HAP-1 (cell line): ENCODE measurements at regions of chr2 and their contacts with region 1.

Region 1: DNA sequence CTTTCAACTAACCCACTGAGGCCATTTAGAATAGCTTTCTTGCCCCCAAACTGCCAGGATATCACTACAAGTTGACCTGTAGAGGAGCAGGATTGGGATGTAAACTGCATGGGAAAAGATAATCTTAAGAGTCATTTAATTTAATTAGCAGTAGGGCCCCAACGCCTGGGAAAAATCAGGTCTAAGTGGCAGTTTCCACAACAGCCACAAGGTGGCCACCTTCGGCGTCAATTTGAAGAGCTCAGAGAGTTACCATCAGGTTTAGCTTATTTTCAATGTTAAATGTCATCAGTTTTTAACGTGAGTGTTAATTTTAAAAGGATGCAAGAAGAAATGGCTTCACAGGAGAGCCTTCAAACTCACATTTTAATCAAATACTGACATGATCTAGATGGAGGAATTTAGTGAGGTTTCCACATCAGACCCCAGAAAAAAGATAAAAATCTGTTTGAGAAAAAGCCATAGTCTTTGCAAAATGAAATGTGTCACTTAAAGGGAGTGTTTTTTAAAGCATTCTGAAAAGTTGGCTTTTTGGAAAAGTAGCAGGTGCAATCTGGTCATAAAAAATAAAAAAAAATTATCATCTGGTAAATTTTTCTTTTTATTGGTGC is 77.3 kb upstream of the UPP2 start:
- DNase-seq: peak; percentile 25 to 67
- H3K4me3 ChIP-seq: no peak overlapping the region
- H3K4me1 ChIP-seq: no peaks in the 10 kb centered on the region
- H3K27me3 ChIP-seq: no peaks in the 10 kb centered on the region

Region 2: DNA sequence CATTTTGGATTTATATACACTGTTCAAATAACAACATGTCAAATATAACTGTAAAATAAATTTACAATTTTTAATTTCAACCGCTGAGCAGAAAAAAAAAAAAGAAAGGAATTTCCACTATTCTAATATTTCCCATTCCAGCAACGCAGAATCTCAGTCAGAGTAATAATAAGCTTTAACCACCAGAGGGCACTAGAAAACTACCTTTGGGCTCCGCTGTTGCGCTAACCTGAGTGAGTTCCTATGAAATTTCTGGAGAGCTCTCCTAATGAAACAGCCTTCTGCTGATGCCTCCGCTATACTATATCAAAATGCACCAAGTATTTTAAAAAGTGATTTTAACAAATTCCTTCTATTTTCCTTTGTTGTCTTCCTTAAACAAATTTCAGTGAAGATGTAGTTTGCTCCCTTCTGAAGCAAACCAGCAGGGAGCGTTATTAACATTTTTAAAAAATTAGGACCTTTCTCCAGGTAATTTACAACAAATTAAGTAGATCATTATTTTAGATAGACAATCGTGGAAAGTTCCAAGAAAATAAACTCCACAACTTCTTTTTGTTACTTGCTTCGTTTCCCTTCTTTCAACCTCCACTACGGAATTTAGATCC is 721.8 kb before region 1 on chr2:
- in situ Hi-C with region 1: loop called (anchors 25 kb)
- DNase-seq: peak; percentile 47 to 67
- H3K4me3 ChIP-seq: no peak overlapping the region
- H3K4me1 ChIP-seq: no peaks in the 10 kb centered on the region
- H3K27me3 ChIP-seq: no peaks in the 10 kb centered on the region

Region 3: DNA sequence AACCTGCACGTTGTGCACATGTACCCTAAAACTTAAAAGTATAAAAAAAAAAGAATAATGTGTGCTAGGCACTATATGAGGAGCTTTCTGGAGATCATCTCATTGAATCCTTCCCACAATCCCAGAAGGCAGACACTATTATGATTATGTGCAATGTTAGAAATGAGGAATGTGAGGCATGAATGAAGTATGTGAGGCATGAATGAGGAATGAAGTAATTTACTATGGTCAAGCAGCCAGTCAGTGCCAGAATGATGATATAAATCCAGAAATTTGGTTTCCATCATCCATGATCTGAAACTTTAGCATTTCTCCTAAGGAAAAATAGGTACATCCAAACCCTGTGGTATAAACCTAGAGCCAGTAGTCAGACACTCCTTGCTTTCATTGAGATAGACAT is 390.1 kb after region 1 on chr2:
- in situ Hi-C with region 1: no loop called
- DNase-seq: no peak
- H3K4me3 ChIP-seq: no peak overlapping the region
- H3K4me1 ChIP-seq: no peaks in the 10 kb centered on the region
- H3K27me3 ChIP-seq: no peaks in the 10 kb centered on the region